ENCODE measurements at regions of chr19 and their contacts with region 1.

Region 1: GRCh38 chr19:46186101-46187100 is 38.4 kb downstream of the IGFL2 start:
- DNase-seq: no peak
- ATAC-seq: no peak
- H3K4me3 ChIP-seq: no peak overlapping the region
- H3K27ac ChIP-seq: no peak overlapping the region
- H3K4me1 ChIP-seq: no peaks in the 10 kb centered on the region
- H3K27me3 ChIP-seq: peaks cover 54% of the 10 kb centered on the region
- CTCF ChIP-seq: no peak
- POLR2A ChIP-seq: no peak
- RAD21 ChIP-seq: no peak

Region 2: GRCh38 chr19:46265217-46265828 is 78.9 kb after region 1 on chr19:
- CTCF ChIA-PET with region 1: no interaction called
- POLR2A ChIA-PET with region 1: no interaction called
- dilution Hi-C with region 1: no loop called
- in situ Hi-C with region 1: no loop called
- intact Hi-C with region 1: loop called (anchors 1 kb)
- DNase-seq: peak; percentile 74
- ATAC-seq: peak; percentile 99
- H3K4me3 ChIP-seq: no peak overlapping the region
- H3K27ac ChIP-seq: no peak overlapping the region
- H3K4me1 ChIP-seq: no peaks in the 10 kb centered on the region
- H3K27me3 ChIP-seq: peaks cover 35% of the 10 kb centered on the region
- CTCF ChIP-seq: peak; percentile 91
- POLR2A ChIP-seq: no peak
- RAD21 ChIP-seq: peak; percentile 85

Measured in IMR-90 (cell line).